CD8-positive, alpha-beta T cell (primary cell): ENCODE measurements at regions of chr22 and their contacts with region 1.

Region 1: GRCh38 chr22:44180706-44181032 is at the start of gene PARVG:
- DNase-seq: peak; percentile 10 to 84 (median 44)
- ATAC-seq: peak; percentile 43
- H3K4me3 ChIP-seq: peak within 1 kb of the TSS; percentile 79 to 86
- H3K4me3 Mint-ChIP-seq: peak within 1 kb of the TSS; percentile 84
- H3K27ac ChIP-seq: peak within 1 kb of the TSS; percentile 73 to 81
- H3K27ac Mint-ChIP-seq: peak within 1 kb of the TSS; percentile 97
- H3K4me1 ChIP-seq: peaks cover 22% of the 10 kb centered on the region
- H3K4me1 Mint-ChIP-seq: peaks cover 34% of the 10 kb centered on the region
- H3K27me3 ChIP-seq: no peaks in the 10 kb centered on the region
- H3K27me3 Mint-ChIP-seq: no peaks in the 10 kb centered on the region
- CTCF ChIP-seq: no peak
- total RNA-seq, gene PARVG: 122 to 124 TPM

Region 2: GRCh38 chr22:43955040-43955882 is 225.4 kb before region 1 on chr22 and contains the start of gene SAMM50:
- CTCF ChIA-PET with region 1: no interaction called
- POLR2A ChIA-PET with region 1: interaction called, 3 read pairs
- intact Hi-C with region 1: loop called in 1 of 2 experiments (anchors 5 kb)
- DNase-seq: peak; percentile 82 to 95 (median 92)
- ATAC-seq: peak; percentile 98
- H3K4me3 ChIP-seq: peak within 1 kb of the TSS; percentile 86 to 91
- H3K4me3 Mint-ChIP-seq: peak within 1 kb of the TSS; percentile 97
- H3K27ac ChIP-seq: peak within 1 kb of the TSS; percentile 83 to 89
- H3K27ac Mint-ChIP-seq: peak within 1 kb of the TSS; percentile 93
- H3K4me1 ChIP-seq: peaks cover 22% of the 10 kb centered on the region
- H3K4me1 Mint-ChIP-seq: peaks cover 44% of the 10 kb centered on the region
- H3K27me3 ChIP-seq: no peaks in the 10 kb centered on the region
- H3K27me3 Mint-ChIP-seq: peaks cover 10% of the 10 kb centered on the region
- CTCF ChIP-seq: no peak
- total RNA-seq, gene SAMM50: 20.7 to 24.9 TPM

Region 3: DNA sequence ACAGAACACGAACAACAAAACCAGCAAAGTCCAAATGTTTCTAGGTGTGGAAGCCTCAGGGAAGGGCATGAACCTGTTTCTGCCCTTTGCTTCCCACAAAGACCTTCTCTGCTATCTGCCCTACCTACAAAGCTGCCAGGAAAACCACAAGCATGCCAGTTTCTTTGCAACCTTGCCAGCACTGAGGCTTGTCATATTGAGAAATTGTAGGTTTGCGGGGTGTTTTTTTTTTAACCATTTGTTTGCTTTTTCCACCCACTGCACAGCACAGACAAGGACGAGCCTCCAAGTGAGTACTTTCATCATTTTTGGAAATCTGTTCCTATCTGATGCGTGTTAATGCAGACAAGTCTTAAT is 12.8 kb after region 1 on chr22:
- CTCF ChIA-PET with region 1: interaction called, 4 read pairs
- POLR2A ChIA-PET with region 1: interaction called, 5 read pairs
- intact Hi-C with region 1: loop called in 1 of 2 experiments (anchors 1 kb)
- DNase-seq: peak in 1 of 9 experiments; percentile 36
- ATAC-seq: peak; percentile 20
- H3K4me3 ChIP-seq: no peak overlapping the region
- H3K4me3 Mint-ChIP-seq: peak overlapping the region; percentile 50
- H3K27ac ChIP-seq: no peak overlapping the region
- H3K27ac Mint-ChIP-seq: peak overlapping the region; percentile 45
- H3K4me1 ChIP-seq: peaks cover 37% of the 10 kb centered on the region
- H3K4me1 Mint-ChIP-seq: peaks cover 32% of the 10 kb centered on the region
- H3K27me3 ChIP-seq: no peaks in the 10 kb centered on the region
- H3K27me3 Mint-ChIP-seq: no peaks in the 10 kb centered on the region
- CTCF ChIP-seq: no peak

Region 4: GRCh38 chr22:44497218-44497904 is 316.7 kb after region 1 on chr22:
- CTCF ChIA-PET with region 1: no interaction called
- POLR2A ChIA-PET with region 1: no interaction called
- intact Hi-C with region 1: loop called (anchors 1 to 5 kb)
- DNase-seq: peak in 2 of 9 experiments; percentile 30 to 54
- ATAC-seq: no peak
- H3K4me3 ChIP-seq: peak overlapping the region; percentile 46 to 65
- H3K4me3 Mint-ChIP-seq: peak overlapping the region; percentile 77
- H3K27ac ChIP-seq: peak overlapping the region; percentile 64 to 81
- H3K27ac Mint-ChIP-seq: peak overlapping the region; percentile 81
- H3K4me1 ChIP-seq: peaks cover 44% of the 10 kb centered on the region
- H3K4me1 Mint-ChIP-seq: peaks cover 38% of the 10 kb centered on the region
- H3K27me3 ChIP-seq: no peaks in the 10 kb centered on the region
- H3K27me3 Mint-ChIP-seq: no peaks in the 10 kb centered on the region
- CTCF ChIP-seq: no peak

Region 5: GRCh38 chr22:44625981-44626687 is 445.5 kb after region 1 on chr22:
- CTCF ChIA-PET with region 1: no interaction called
- POLR2A ChIA-PET with region 1: no interaction called
- intact Hi-C with region 1: loop called (anchors 1 to 10 kb)
- DNase-seq: peak; percentile 72 to 91 (median 81)
- ATAC-seq: peak; percentile 90
- H3K4me3 ChIP-seq: no peak overlapping the region
- H3K4me3 Mint-ChIP-seq: no peak overlapping the region
- H3K27ac ChIP-seq: no peak overlapping the region
- H3K27ac Mint-ChIP-seq: no peak overlapping the region
- H3K4me1 ChIP-seq: peaks cover 6% of the 10 kb centered on the region
- H3K4me1 Mint-ChIP-seq: peaks cover 5% of the 10 kb centered on the region
- H3K27me3 ChIP-seq: no peaks in the 10 kb centered on the region
- H3K27me3 Mint-ChIP-seq: no peaks in the 10 kb centered on the region
- CTCF ChIP-seq: peak; percentile 97

Region 6: DNA sequence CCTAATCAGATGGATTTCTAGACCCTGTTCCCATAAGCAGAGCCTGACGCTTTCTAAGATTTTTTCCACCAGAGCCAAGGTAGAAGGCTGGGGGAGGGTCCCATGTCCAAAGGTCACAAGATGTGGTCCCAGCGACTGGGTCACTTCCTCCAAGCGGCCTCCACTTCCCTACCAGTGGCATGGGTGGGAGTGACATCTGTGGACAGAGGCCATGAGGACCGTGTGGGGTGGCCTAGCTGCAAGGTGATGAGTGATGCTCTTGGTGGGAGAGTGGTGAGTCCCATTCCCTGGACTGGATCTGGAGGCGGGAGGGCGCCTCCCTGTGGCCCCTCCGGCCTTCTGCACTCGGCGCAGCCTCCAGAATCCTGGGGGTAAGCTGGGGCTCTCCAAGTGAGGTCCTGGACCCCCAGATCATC is 488.9 kb after region 1 on chr22:
- CTCF ChIA-PET with region 1: no interaction called
- POLR2A ChIA-PET with region 1: no interaction called
- intact Hi-C with region 1: loop called (anchors 5 to 10 kb)
- DNase-seq: peak in 2 of 9 experiments; percentile 40 to 57
- ATAC-seq: no peak
- H3K4me3 ChIP-seq: peak overlapping the region; percentile 60 to 69
- H3K4me3 Mint-ChIP-seq: peak overlapping the region; percentile 78
- H3K27ac ChIP-seq: no peak overlapping the region
- H3K27ac Mint-ChIP-seq: peak overlapping the region; percentile 73
- H3K4me1 ChIP-seq: peaks cover 63% of the 10 kb centered on the region
- H3K4me1 Mint-ChIP-seq: peaks cover 67% of the 10 kb centered on the region
- H3K27me3 ChIP-seq: no peaks in the 10 kb centered on the region
- H3K27me3 Mint-ChIP-seq: no peaks in the 10 kb centered on the region
- CTCF ChIP-seq: peak; percentile 13